Breast epithelium (tissue), 4 donors: ENCODE measurements at regions of chr2 and their contacts with region 1.

Region 1: DNA sequence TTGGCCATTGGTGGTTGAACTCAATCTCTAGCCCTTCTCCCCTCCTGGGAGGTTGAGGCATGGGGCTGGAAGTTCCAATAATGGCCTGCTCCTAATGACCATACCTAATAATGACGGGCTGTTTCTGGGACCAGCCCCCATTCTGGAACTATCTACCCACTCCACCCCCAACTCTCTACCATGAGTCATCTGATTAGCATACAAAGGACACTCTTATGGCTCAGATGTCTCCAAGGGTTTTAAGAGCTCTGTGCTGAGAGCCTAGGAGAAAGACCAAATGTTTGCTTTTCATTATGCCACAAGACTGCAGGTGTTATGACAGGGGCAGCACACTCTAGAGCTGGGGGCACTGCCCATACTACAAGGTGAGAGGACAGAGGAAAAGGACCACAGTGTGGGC is 137.0 kb upstream of the NCKAP5 start:
- DNase-seq: no peak
- H3K4me3 ChIP-seq: no peak overlapping the region
- H3K27ac ChIP-seq: no peak overlapping the region
- H3K4me1 ChIP-seq: no peaks in the 10 kb centered on the region
- H3K27me3 ChIP-seq: no peaks in the 10 kb centered on the region
- CTCF ChIP-seq: no peak
- POLR2A ChIP-seq: no peak

Region 2: GRCh38 chr2:133685636-133686215 is 19.6 kb before region 1 on chr2:
- intact Hi-C with region 1: loop called (anchors 2 kb)
- DNase-seq: no peak
- H3K4me3 ChIP-seq: no peak overlapping the region
- H3K27ac ChIP-seq: no peak overlapping the region
- H3K4me1 ChIP-seq: no peaks in the 10 kb centered on the region
- H3K27me3 ChIP-seq: no peaks in the 10 kb centered on the region
- CTCF ChIP-seq: no peak
- POLR2A ChIP-seq: no peak

Region 3: DNA sequence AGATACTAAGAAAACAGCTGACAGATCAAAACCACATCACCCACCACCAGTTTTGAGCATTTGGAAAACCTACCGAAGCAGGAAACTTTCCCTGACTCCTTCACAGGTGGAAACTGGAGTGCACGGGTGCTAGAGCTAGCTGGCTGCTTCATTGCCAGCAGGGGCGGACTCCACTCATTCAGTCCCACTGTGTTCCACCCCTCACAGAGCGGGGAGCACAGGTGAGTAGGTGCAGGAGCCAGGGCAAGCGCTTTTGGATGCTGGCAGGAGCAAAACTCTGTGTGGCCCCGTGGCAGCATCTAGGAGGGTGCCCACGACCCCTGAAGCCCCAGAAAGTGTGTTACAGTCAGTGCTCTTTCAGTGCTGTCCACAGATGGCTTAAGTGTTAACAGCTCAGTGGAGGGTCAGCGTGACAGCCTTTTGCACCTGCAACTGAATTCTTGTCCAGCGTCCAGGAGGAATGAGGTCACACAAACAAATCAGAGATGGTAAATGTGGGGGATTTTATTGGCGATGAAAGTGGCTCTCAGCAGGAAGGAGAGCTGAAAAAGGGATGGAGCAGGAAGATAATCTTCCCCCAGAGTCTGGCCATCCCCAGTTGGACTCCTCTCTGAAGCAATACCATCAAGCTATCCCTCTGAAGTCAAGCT is 942.4 kb after region 1 on chr2:
- intact Hi-C with region 1: no loop called
- DNase-seq: no peak
- H3K4me3 ChIP-seq: no peak overlapping the region
- H3K27ac ChIP-seq: no peak overlapping the region
- H3K4me1 ChIP-seq: no peaks in the 10 kb centered on the region
- H3K27me3 ChIP-seq: no peaks in the 10 kb centered on the region
- CTCF ChIP-seq: no peak
- POLR2A ChIP-seq: no peak